Adrenal gland (tissue), 19 donors: ENCODE measurements at regions of chr14 and their contacts with region 1.

Region 1: DNA sequence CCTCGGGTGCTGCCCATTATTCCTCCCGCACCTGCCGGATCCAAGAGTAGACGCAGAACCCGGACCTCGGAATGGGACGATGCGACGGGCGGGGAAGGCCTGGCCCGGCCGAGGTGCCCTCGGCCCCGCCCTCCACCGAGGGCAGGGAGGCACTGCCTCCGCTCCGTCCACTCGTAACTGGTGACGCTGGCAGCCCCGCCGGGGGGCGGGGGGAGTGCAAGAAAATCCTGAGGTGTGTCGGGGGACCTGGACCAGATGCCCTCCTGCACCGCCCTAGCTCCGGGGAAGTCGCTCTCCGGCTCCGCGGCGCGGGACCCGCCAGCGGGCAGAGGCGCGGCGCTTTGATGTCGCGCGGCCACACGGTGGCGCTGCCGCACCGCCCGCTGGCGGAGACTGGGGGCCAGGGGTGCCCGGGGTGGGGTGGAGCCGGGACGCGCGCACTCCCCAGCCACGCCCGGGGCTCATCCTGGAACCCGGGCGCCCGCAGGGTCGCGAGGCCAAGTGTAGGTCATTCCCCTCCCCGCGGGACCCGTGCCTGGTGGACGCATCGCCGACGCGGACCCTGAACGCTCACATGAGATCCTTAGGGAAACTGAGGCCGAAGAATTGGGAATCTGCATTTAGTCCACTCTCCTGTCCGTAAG is 202.8 kb downstream of the TTC8 start:
- DNase-seq: peak; percentile 26 to 67 (median 51)
- H3K4me3 ChIP-seq: peak overlapping the region in 2 of 4 donors; percentile 54 to 61
- H3K27ac ChIP-seq: no peak overlapping the region
- H3K4me1 ChIP-seq: peaks cover 6 to 11% of the 10 kb centered on the region in 2 donors
- H3K27me3 ChIP-seq: no peaks in the 10 kb centered on the region
- CTCF ChIP-seq: peak; percentile 26 to 94 (median 78)
- POLR2A ChIP-seq: peak in 1 of 2 donors; percentile 16

Region 2: GRCh38 chr14:89411976-89412375 is 384.8 kb after region 1 on chr14:
- intact Hi-C with region 1: no loop called
- DNase-seq: no peak
- H3K4me3 ChIP-seq: no peak overlapping the region
- H3K27ac ChIP-seq: no peak overlapping the region
- H3K4me1 ChIP-seq: peaks cover 37 to 54% of the 10 kb centered on the region in 2 donors
- H3K27me3 ChIP-seq: no peaks in the 10 kb centered on the region
- CTCF ChIP-seq: no peak
- POLR2A ChIP-seq: no peak

Region 3: GRCh38 chr14:89773644-89774316 is 746.6 kb after region 1 on chr14:
- intact Hi-C with region 1: loop called in 1 of 2 experiments (anchors 10 kb)
- DNase-seq: peak in 5 of 7 donors; percentile 30 to 61 (median 47)
- H3K4me3 ChIP-seq: no peak overlapping the region
- H3K27ac ChIP-seq: no peak overlapping the region
- H3K4me1 ChIP-seq: no peaks in the 10 kb centered on the region
- H3K27me3 ChIP-seq: no peaks in the 10 kb centered on the region
- CTCF ChIP-seq: no peak
- POLR2A ChIP-seq: no peak

Region 4: DNA sequence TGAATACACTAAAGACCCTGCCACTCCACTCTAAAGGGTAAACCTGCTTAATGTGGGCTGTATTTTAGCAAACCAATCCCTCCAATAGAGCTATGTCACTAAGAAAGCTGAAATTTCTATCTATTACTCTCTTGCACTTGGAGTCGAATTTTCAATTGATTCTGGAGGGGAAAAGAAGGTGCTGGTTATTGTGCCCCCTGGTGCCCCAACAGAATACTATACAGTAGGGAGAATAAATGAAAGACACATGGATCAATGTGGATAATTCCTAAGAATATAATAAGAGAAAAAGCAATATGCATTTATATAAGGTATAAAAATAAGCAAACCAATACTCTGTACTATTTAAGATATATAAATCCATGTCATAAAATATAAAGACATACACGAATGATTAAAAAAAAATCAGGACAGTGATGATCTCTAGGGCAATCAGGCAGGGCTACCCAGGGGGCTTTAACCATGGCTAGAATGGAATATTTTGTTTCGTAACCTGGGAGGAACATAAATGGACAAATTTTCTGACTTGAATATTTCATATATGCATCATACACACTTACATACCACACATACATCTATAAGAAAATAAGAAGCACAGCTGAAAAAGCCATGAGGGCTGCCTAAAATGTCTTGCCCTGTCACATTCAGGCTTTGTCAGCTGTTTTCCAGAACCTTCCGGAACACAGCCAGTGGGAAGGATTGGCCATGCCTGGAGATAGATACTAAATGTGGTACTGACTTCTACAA is 872.9 kb after region 1 on chr14:
- intact Hi-C with region 1: loop called in 1 of 2 experiments (anchors 5 kb)
- DNase-seq: peak in 1 of 7 donors; percentile 14
- H3K4me3 ChIP-seq: no peak overlapping the region
- H3K27ac ChIP-seq: no peak overlapping the region
- H3K4me1 ChIP-seq: no peaks in the 10 kb centered on the region
- H3K27me3 ChIP-seq: no peaks in the 10 kb centered on the region
- CTCF ChIP-seq: peak; percentile 33 to 61 (median 52)
- POLR2A ChIP-seq: no peak

Region 5: DNA sequence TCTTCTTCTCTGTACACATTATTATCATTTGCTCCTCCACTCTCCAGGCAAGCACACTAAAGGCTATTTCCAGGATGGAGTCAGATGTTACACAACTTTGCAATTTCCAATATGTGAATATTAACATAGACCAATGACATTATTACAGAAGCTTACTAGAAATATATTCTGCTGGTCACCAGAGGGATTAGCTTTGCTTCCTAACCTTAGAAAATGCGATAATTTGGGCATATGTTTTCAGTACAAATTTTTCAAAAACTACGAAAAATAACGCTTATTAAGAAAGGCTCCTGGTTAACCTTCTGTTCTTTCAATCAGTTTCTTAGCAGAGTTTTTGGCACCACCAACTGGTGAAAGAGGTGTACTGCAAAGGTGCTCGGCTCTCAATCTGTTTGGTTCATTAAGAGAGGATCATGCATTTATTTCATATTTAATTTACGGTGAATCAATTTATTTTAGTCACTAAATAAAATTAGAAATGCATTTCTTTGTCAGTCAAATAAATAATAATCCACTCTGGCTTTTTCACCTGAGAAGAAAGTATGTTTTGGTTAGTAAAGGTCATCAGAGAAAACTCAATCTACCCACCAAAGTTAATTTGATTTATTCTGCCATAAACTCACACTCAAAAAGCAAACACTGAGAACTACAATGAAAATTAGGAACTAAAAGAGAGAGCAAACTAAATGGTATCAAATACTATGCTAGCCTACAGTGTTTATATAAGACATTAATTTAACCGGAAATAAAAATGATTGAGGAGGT is 888.1 kb after region 1 on chr14:
- intact Hi-C with region 1: loop called in 1 of 2 experiments (anchors 10 kb)
- DNase-seq: peak; percentile 34 to 91 (median 61)
- H3K4me3 ChIP-seq: no peak overlapping the region
- H3K27ac ChIP-seq: no peak overlapping the region
- H3K4me1 ChIP-seq: peaks cover 0 to 13% of the 10 kb centered on the region in 2 donors
- H3K27me3 ChIP-seq: no peaks in the 10 kb centered on the region
- CTCF ChIP-seq: peak; percentile 83 to 96 (median 89)
- POLR2A ChIP-seq: no peak